HepG2 (cell line): ENCODE measurements at regions of chr5 and their contacts with region 1.

Region 1: DNA sequence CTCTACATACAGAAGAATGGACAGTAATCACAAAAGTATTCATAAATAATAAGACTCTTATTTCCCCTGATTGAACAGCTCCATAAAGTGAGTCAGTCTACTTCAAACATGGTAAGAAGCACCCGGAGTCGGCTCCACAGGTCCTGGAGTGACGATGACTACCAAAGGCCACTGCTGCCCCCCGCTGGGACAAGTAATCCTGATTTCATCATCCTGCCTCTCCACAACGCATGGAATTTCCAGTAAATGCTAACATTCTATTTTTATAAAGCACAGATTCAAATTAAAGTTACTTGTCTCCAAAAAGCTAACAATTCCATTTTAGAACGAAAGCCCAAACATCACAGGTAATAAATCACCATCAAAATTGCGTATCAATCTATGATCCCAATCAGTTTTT is 16.2 kb downstream of the ATPSCKMT start:
- DNase-seq: peak; percentile 37
- ATAC-seq: peak; percentile 84
- H3K4me3 ChIP-seq: no peak overlapping the region
- H3K27ac ChIP-seq: no peak overlapping the region
- H3K4me1 ChIP-seq: no peaks in the 10 kb centered on the region
- H3K27me3 ChIP-seq: no peaks in the 10 kb centered on the region
- CTCF ChIP-seq: peak; percentile 62
- EP300 ChIP-seq: no peak
- POLR2A ChIP-seq: no peak
- RAD21 ChIP-seq: 0 out of 2 replicates have a peak, but pooled peaks have one; percentile 35

Region 2: DNA sequence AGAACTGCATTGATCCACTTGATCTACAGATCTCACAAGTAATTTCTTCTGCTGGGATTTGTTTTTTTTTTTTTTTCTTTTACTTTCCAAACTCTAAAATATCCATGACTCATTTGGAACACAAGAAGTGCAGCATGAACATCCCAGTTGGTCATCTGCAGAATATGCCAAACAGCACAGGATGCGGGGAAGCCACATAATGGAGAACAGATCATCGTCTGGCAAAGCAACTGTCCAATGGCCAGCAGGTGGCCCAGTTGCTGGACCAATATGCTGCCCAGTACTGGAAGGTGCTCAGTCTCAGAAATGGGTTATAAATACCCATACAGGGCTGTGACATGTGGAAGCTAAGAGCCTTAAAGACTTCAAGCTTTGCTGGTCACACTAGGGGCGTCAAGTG is 382.0 kb before region 1 on chr5:
- CTCF ChIA-PET with region 1: no interaction called
- POLR2A ChIA-PET with region 1: no interaction called
- in situ Hi-C with region 1: no loop called
- intact Hi-C with region 1: loop called (anchors 5 kb)
- DNase-seq: no peak
- ATAC-seq: peak; percentile 81
- H3K4me3 ChIP-seq: no peak overlapping the region
- H3K27ac ChIP-seq: no peak overlapping the region
- H3K4me1 ChIP-seq: no peaks in the 10 kb centered on the region
- H3K27me3 ChIP-seq: no peaks in the 10 kb centered on the region
- CTCF ChIP-seq: peak; percentile 46; the same call in 1 of the 2 replicates
- EP300 ChIP-seq: no peak
- POLR2A ChIP-seq: no peak
- RAD21 ChIP-seq: no peak

Region 3: DNA sequence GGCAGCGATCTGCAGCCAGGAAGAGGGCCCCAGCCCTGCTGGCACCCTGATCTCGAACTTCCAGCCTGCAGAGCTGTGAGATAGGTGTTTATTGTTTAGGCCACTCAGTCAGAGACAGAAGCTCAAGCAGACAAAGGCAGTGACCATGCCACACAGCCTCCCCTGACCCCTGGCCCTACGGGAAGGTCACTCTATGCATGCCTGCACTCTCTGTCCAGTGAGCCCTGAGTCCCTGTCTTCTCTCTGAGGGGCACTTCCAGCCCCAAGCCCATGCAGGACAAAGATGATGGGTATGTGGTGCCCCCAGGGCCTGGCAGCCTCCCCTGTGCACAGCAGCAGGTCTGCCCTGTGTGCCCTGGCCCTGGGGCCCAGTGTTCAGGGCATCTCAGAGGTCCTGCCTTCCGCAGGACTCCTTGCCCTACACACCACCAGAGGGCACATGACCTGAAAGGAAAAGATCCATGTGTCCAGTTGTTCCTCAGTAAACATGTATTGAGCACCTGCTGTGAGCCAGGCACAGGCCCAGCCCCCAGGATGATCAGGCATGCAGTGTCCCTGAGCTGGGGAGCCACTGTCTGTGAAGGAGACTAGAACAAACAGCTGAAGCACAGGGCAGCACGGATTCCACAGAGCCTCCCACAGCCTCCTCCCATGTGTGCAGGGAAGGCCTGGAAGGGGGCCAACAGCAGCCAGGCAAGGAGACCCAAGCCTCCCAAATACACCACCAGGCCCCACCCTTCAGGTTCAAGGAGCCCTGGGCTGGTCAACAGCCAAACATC is 93.1 kb before region 1 on chr5:
- CTCF ChIA-PET with region 1: interaction called, 3 read pairs
- POLR2A ChIA-PET with region 1: no interaction called
- in situ Hi-C with region 1: loop called (anchors 5 kb)
- intact Hi-C with region 1: loop called (anchors 1 kb)
- DNase-seq: peak; percentile 35
- ATAC-seq: peak; percentile 98
- H3K4me3 ChIP-seq: no peak overlapping the region
- H3K27ac ChIP-seq: no peak overlapping the region
- H3K4me1 ChIP-seq: no peaks in the 10 kb centered on the region
- H3K27me3 ChIP-seq: no peaks in the 10 kb centered on the region
- CTCF ChIP-seq: peak; percentile 65
- EP300 ChIP-seq: no peak
- POLR2A ChIP-seq: no peak
- RAD21 ChIP-seq: no peak; the same call in 1 of the 2 replicates